ENCODE measurements at regions of chrX and their contacts with region 1.

Region 1: GRCh38 chrX:135931644-135932487 is 38.4 kb downstream of the SAGE1 start:
- DNase-seq: no peak
- ATAC-seq: peak; percentile 95
- H3K4me3 ChIP-seq: no peak overlapping the region
- H3K27ac ChIP-seq: no peak overlapping the region
- H3K4me1 ChIP-seq: no peaks in the 10 kb centered on the region
- H3K27me3 ChIP-seq: no peaks in the 10 kb centered on the region; a peak in 1 of 4 replicates
- CTCF ChIP-seq: peak; percentile 58 to 88 (median 60)
- EP300 ChIP-seq: no peak
- POLR2A ChIP-seq: no peak
- RAD21 ChIP-seq: peak; percentile 68

Region 2: DNA sequence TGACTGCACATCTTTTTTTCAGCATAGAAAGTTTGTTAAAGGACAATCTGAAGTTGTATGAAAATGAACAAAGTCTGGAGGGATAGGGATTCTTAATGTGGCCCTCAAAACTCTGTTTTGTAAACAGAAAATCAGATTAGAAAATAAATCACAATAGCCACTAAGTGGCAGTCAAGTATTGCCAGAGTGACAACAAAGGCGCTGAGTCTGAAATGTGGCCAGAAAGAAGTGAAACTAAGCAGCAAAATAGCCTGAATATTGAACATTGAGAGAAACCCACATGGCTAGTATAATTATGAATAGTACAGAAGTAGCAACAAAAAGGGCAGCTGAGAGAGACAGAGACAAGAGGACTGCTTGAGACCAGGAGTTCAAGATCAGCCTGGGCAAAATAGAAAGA is 299.5 kb before region 1 on chrX:
- CTCF ChIA-PET with region 1: interaction called, 10 read pairs
- POLR2A ChIA-PET with region 1: no interaction called
- RAD21 ChIA-PET with region 1: interaction called, 4 read pairs
- SMC1A ChIA-PET with region 1: interaction called, 3 read pairs
- in situ Hi-C with region 1: loop called (anchors 10 kb)
- intact Hi-C with region 1: loop called (anchors 2 kb)
- DNase-seq: peak; percentile 21
- ATAC-seq: peak; percentile 91
- H3K4me3 ChIP-seq: no peak overlapping the region
- H3K27ac ChIP-seq: no peak overlapping the region
- H3K4me1 ChIP-seq: no peaks in the 10 kb centered on the region; the same call in 1 of the 2 replicates
- H3K27me3 ChIP-seq: no peaks in the 10 kb centered on the region
- CTCF ChIP-seq: peak; percentile 22 to 67 (median 25); a peak in 4 of 6 replicates
- EP300 ChIP-seq: no peak
- POLR2A ChIP-seq: no peak
- RAD21 ChIP-seq: peak; percentile 79

Region 3: GRCh38 chrX:135707880-135708279 is 224.0 kb before region 1 on chrX:
- CTCF ChIA-PET with region 1: interaction called, 10 read pairs
- POLR2A ChIA-PET with region 1: no interaction called
- RAD21 ChIA-PET with region 1: no interaction called
- SMC1A ChIA-PET with region 1: no interaction called
- in situ Hi-C with region 1: no loop called
- intact Hi-C with region 1: no loop called
- DNase-seq: no peak
- ATAC-seq: peak; percentile 84
- H3K4me3 ChIP-seq: no peak overlapping the region
- H3K27ac ChIP-seq: no peak overlapping the region
- H3K4me1 ChIP-seq: no peaks in the 10 kb centered on the region
- H3K27me3 ChIP-seq: no peaks in the 10 kb centered on the region
- CTCF ChIP-seq: peak; percentile 54 to 63 (median 62); a peak in 5 of 6 replicates
- EP300 ChIP-seq: no peak
- POLR2A ChIP-seq: no peak
- RAD21 ChIP-seq: peak; percentile 50

Region 4: GRCh38 chrX:135740683-135741149 is 191.2 kb before region 1 on chrX:
- CTCF ChIA-PET with region 1: interaction called, 16 read pairs
- POLR2A ChIA-PET with region 1: no interaction called
- RAD21 ChIA-PET with region 1: no interaction called
- SMC1A ChIA-PET with region 1: no interaction called
- in situ Hi-C with region 1: no loop called
- intact Hi-C with region 1: loop called (anchors 5 kb)
- DNase-seq: no peak
- ATAC-seq: peak; percentile 88
- H3K4me3 ChIP-seq: no peak overlapping the region
- H3K27ac ChIP-seq: no peak overlapping the region
- H3K4me1 ChIP-seq: no peaks in the 10 kb centered on the region
- H3K27me3 ChIP-seq: no peaks in the 10 kb centered on the region
- CTCF ChIP-seq: peak; percentile 52 to 69 (median 66); a peak in 5 of 6 replicates
- EP300 ChIP-seq: no peak
- POLR2A ChIP-seq: no peak
- RAD21 ChIP-seq: peak; percentile 60

Region 5: GRCh38 chrX:135944486-135944885 is 12.6 kb after region 1 on chrX:
- CTCF ChIA-PET with region 1: interaction called, 19 read pairs
- POLR2A ChIA-PET with region 1: no interaction called
- RAD21 ChIA-PET with region 1: no interaction called
- SMC1A ChIA-PET with region 1: interaction called, 3 read pairs
- in situ Hi-C with region 1: no loop called
- intact Hi-C with region 1: no loop called
- DNase-seq: no peak
- ATAC-seq: no peak
- H3K4me3 ChIP-seq: no peak overlapping the region
- H3K27ac ChIP-seq: no peak overlapping the region
- H3K4me1 ChIP-seq: no peaks in the 10 kb centered on the region
- H3K27me3 ChIP-seq: no peaks in the 10 kb centered on the region; a peak in 1 of 4 replicates
- CTCF ChIP-seq: no peak
- EP300 ChIP-seq: no peak
- POLR2A ChIP-seq: no peak
- RAD21 ChIP-seq: no peak

Measured in GM12878 (cell line).